Ascending aorta (tissue), 2 donors: ENCODE measurements at regions of chr9 and their contacts with region 1.

Region 1: DNA sequence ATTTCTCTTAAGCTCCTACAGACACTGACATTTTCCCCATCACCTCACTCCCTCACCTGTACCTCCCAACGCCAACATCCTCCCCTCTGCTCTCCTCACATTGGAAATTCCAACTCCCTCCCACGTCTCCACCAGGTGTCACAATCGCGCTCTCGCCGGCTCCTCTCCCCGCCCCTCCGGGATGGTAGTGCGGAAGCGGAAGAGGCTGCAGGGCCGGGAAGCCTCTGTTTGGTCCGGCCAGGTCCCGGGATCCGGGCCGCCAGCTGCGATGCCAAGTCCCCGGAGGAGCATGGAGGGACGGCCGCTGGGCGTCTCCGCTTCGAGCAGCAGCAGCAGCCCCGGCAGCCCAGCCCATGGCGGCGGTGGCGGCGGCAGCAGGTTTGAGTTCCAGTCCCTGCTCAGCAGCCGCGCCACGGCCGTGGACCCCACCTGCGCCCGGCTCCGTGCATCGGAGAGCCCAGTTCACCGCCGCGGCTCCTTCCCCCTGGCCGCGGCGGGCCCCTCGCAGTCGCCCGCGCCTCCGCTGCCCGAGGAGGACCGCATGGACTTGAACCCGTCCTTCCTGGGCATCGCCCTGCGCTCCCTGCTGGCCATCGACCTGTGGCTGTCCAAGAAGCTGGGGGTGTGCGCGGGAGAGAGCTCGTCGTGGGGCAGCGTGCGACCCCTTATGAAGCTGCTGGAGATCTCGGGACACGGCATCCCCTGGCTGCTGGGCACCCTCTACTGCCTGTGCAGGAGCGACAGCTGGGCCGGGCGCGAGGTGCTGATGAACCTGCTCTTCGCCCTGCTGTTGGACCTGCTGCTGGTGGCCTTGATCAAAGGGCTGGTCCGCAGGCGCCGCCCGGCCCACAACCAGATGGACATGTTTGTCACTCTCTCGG is at the start of gene PLPP6:
- DNase-seq: peak; percentile 59 to 95
- H3K4me3 ChIP-seq: peak within 1 kb of the TSS; percentile 66 to 86
- H3K27ac ChIP-seq: peak within 1 kb of the TSS; percentile 82 to 87
- H3K4me1 ChIP-seq: peaks cover 7 to 16% of the 10 kb centered on the region in 2 donors
- H3K27me3 ChIP-seq: no peaks in the 10 kb centered on the region
- CTCF ChIP-seq: peak; percentile 33 to 67 (median 45)
- total RNA-seq, gene PLPP6: 19.2 TPM

Region 2: DNA sequence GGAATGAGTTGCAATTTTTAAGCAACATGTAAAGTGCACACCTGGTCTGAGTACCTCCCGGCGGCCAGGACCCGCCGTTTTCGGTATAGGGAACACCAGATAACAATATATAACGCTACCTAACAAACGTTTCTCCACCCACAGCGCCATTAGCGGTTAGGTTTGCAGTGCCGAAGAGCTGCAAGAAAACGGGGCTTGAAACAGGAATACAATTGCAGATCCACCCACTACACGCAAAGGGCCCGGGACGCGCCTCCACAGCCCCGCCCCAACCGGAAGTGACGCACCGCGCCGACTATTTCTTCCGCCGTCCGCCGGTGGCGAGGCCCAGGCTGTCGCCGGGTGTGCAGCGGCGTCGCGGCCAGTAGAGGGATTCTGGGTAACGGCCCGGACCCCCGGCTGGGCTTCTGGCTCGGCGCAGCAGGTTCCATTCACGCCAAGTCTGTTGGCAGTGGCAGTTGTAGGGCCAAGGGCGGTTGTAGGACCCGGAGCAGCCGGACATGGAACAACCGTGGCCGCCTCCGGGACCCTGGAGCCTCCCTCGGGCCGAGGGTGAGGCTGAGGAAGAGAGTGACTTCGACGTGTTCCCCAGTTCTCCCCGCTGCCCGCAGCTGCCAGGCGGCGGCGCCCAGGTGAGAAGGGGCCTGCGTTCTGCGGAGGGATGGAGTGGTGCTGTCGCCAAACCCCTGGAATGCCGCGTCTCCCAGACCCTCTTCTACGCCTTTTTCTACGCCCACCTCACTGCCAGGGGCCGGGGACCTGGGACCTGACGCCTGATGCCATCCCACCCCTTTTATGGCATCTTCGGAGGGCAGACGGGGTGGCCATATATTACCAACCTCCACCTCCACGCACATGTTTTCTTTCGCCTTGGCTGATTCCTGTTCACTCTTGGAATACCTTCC is 17.2 kb after region 1 on chr9 and contains the start of gene CDC37L1:
- intact Hi-C with region 1: loop called (anchors 1 kb)
- DNase-seq: peak; percentile 87 to 99
- H3K4me3 ChIP-seq: peak within 1 kb of the TSS; percentile 79 to 91
- H3K27ac ChIP-seq: peak within 1 kb of the TSS; percentile 97 to 98
- H3K4me1 ChIP-seq: peaks cover 0 to 16% of the 10 kb centered on the region in 2 donors
- H3K27me3 ChIP-seq: no peaks in the 10 kb centered on the region
- CTCF ChIP-seq: peak; percentile 61 to 76 (median 76)
- total RNA-seq, gene CDC37L1: 17.2 TPM

Region 3: DNA sequence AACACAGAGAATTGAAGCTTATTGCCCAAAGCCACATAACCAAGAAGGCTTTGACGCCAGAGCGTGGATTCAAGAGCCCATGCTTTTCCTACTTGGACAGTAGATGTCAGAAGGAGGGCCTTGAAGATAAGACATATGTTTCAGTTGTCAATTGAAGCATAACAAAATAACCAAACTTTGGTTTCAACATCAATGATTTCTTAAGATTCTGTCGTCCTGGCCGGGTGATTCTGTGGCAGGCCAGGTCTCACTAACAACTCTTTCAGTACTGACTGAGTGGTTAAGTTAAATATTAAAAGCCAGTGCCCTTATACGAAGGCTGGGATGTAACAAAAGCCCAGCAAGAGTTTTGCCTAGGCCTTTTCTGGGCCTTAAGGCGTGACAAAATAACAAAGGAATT is 224.3 kb after region 1 on chr9:
- intact Hi-C with region 1: no loop called
- DNase-seq: no peak
- H3K4me3 ChIP-seq: no peak overlapping the region
- H3K27ac ChIP-seq: peak overlapping the region; percentile 81
- H3K4me1 ChIP-seq: peaks cover 0 to 29% of the 10 kb centered on the region in 2 donors
- H3K27me3 ChIP-seq: no peaks in the 10 kb centered on the region
- CTCF ChIP-seq: no peak